ENCODE measurements at regions of chr9 and their contacts with region 1.

Region 1: DNA sequence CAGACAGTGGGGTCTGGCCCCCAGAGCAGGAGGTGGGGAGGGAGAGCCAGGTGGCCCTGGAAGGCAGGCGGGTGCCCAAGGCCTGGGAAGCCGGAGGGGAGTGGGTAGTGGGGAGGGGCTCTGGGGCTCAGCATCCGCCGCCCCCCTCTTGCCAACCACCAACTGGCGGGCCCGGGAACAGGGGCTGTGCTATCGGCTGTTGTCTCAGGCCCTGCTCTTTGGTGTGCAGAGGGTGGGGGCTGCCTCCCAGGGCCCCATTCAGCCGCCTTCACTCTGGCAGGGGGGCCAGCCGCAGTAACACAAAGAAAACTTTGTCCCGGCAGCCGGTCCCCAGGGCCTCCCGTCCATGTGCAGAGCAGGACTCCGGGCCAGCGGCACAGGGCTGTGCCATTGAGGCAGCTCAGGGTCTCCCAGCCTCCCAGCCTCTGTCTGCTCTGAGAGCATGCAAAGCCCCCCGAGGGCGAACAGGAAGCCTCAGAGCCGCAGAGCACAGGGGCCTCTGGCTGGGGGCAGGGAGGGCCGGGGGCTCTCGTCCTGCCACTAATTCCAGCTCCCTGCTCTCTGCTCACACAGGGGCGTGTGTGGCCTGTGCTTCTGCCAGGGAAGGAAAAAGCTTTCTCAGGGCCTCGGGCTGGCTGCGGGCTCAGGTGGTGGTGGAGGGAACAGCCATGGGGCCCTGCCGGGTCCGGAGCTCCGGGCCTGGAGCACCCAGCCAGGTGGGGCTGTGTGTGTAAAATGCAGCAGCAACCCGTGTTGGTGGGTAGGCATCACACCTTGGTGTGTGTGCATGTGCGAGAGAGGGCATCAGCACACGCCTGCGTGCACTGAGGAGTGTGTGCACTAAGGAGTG is 54.2 kb upstream of the NOTCH1 start:
- DNase-seq: no peak
- H3K4me3 ChIP-seq: no peak overlapping the region
- H3K27ac ChIP-seq: no peak overlapping the region
- H3K4me1 ChIP-seq: peaks cover 5% of the 10 kb centered on the region
- H3K27me3 ChIP-seq: no peaks in the 10 kb centered on the region
- CTCF ChIP-seq: no peak
- POLR2A ChIP-seq: no peak

Region 2: DNA sequence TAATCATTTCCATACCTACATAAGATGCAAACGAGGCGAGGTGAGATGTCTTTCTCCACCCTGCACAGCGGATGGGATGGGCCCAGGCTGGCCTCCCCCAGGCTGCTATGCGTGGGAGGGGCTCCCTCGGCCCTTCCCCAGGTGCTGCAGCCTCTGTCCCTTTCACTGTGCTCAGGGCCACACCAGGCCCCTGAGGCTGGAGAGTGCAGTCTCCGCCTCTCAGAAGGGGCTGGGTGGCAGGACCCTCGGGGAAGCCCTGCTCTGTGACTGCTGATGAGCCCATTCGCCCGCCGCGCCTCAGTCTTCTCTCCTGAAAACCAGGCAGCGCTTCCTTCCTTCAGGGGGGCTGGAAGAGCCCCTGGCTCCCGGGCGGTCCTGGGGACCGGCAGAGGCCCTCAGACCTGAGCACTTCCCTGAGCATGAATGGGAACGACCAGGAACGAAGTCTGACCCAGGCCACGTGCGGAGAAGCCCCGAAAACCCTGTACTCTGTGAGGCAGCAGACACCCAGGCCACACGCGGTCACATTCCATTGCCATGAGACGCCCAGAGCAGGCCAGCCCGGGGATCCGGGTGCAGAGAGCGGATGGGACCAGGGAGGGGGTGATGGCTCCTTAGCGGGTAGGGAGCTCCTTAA is 32.3 kb before region 1 on chr9:
- CTCF ChIA-PET with region 1: no interaction called
- POLR2A ChIA-PET with region 1: no interaction called
- dilution Hi-C with region 1: no loop called
- intact Hi-C with region 1: loop called (anchors 5 kb)
- DNase-seq: no peak
- H3K4me3 ChIP-seq: no peak overlapping the region
- H3K27ac ChIP-seq: peak overlapping the region; percentile 18
- H3K4me1 ChIP-seq: peaks cover 12% of the 10 kb centered on the region
- H3K27me3 ChIP-seq: no peaks in the 10 kb centered on the region
- CTCF ChIP-seq: no peak
- POLR2A ChIP-seq: no peak

Measured in endothelial cell of umbilical vein (primary cell).